ENCODE measurements at regions of chr1 and their contacts with region 1.

Region 1: DNA sequence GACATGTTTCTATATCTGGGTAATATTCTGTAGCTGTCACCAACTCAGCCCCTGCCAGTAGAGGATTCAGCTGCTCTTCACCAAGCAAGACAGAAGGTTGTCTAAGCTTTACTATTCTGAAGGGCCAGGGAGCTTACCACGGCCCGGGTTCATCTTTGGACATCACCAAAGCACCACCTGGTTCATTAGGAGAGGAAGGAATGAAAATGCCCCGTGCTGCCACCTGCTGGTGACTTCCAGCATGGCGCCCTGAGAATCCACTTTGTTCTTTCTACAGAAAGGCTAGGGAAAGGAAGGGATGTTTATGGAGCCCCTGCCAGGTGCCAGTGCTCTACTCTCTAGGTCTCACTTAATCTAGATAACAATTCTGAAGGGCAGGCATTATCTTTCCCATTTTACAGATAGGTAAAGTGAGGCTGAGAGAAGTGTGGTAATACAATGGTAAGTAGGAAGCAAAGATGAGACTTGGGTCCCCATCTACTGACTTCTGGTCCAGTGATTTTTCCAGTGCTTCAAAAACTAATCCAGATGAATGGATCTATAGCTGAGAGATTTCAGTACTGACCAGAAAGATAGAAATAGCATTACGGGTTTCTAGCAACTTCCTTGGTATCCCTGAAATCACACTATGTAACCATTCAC is 79.5 kb downstream of the BEND5 start:
- DNase-seq: peak in 1 of 2 donors; percentile 53
- ATAC-seq: peak; percentile 45 to 66
- H3K4me3 ChIP-seq: no peak overlapping the region
- H3K27ac ChIP-seq: no peak overlapping the region
- H3K4me1 ChIP-seq: no peaks in the 10 kb centered on the region
- H3K27me3 ChIP-seq: peaks cover 0 to 9% (median 5%) of the 10 kb centered on the region in 3 donors
- CTCF ChIP-seq: peak; percentile 64 to 91 (median 88)
- POLR2A ChIP-seq: no peak

Region 2: DNA sequence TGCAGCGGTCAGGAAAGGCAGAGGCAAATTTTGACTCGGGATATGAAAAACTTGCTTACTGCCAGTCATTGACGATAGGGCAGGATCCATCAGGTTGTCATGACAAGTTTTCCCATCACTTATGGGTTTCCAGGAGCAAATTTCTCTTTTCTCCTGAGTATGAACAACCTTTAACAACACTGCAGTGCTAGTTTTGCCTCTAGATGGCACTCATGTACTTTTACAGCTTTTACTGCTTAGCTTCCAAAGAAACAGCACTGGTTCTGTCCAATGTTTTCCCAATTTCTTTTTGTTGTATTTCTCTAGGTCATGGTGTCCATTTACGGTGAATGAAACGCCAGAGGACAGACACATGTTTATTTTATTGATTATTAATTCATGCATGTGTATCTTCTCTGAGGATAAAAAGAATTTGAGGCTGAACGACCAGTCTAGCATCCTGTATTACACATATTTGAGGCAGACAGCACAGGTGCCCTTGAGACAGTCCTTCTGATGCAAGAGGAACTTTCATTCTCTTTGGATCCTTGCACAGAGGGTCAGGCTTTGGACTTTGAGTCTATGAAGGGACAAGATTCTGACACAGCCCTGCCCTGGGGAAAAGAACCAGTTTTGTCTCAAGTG is 587.7 kb before region 1 on chr1:
- in situ Hi-C with region 1: loop called in 1 of 4 experiments (anchors 25 kb)
- intact Hi-C with region 1: no loop called
- DNase-seq: no peak
- ATAC-seq: no peak
- H3K4me3 ChIP-seq: no peak overlapping the region
- H3K27ac ChIP-seq: no peak overlapping the region
- H3K4me1 ChIP-seq: no peaks in the 10 kb centered on the region
- H3K27me3 ChIP-seq: no peaks in the 10 kb centered on the region
- CTCF ChIP-seq: peak; percentile 43 to 76 (median 52)
- POLR2A ChIP-seq: no peak

Region 3: GRCh38 chr1:48552420-48552819 is 144.8 kb before region 1 on chr1:
- in situ Hi-C with region 1: loop called in 1 of 4 experiments (anchors 10 kb)
- intact Hi-C with region 1: loop called (anchors 1 kb)
- DNase-seq: peak in 1 of 2 donors; percentile 19
- ATAC-seq: peak; percentile 74
- H3K4me3 ChIP-seq: no peak overlapping the region
- H3K27ac ChIP-seq: peak overlapping the region in 2 of 4 donors; percentile 63 to 64
- H3K4me1 ChIP-seq: peaks cover 11 to 13% of the 10 kb centered on the region in 2 donors
- H3K27me3 ChIP-seq: no peaks in the 10 kb centered on the region
- CTCF ChIP-seq: peak; percentile 23 to 56 (median 43)
- POLR2A ChIP-seq: no peak

Region 4: GRCh38 chr1:48572646-48573261 is 124.4 kb before region 1 on chr1:
- in situ Hi-C with region 1: loop called in 2 of 4 experiments (anchors 5 to 10 kb)
- intact Hi-C with region 1: loop called (anchors 1 kb)
- DNase-seq: peak in 1 of 2 donors; percentile 16
- ATAC-seq: peak; percentile 36 to 42
- H3K4me3 ChIP-seq: no peak overlapping the region
- H3K27ac ChIP-seq: no peak overlapping the region
- H3K4me1 ChIP-seq: no peaks in the 10 kb centered on the region
- H3K27me3 ChIP-seq: no peaks in the 10 kb centered on the region
- CTCF ChIP-seq: peak; percentile 21 to 70 (median 41)
- POLR2A ChIP-seq: no peak

Region 5: DNA sequence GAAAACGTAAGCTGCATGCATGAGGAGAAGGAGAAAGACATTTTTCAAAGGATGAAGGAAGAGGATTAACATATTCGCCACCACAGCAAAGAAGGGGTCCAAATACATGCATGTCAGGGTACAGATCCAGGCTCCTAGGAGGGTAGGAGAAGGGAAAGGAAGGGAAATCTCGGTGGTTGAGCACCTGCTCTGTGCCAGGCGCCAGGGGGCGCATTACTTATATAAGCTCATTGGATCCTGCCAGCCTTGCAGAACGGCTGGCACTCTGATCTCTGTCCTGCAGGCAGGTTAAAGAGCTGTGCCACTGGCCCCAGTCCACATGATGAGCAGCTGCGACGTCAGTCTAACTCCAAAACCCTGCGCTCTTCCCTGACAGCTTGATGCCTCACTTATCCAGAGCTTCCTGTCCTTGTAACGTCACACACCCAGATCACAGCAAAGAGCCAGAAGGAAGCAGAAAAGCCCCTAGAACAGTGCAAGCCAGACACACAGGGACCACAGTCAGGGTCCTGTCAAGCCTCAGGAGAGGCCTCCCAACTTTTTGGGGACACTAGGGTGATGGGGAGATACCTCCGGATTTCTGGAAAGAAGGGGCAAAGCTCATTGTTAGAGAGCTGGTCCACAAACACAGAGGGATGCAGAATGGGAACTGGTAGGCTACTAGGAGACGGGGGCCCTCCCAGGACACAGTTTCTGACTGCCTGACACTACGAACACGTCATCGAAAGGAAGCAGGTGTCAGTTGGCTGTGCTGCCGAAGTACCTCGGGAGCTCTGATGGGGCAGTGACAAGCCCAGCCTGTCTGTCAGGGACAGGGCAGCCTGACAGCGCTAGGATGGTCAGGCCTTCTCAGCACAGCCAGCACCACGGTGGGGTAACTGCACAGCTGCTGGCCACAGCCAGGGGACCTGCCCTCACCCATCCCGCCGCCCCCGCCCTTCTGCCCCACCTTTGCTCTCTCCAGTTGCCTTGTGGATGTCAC is 19.6 kb before region 1 on chr1:
- in situ Hi-C with region 1: no loop called
- intact Hi-C with region 1: loop called (anchors 2 kb)
- DNase-seq: peak; percentile 21 to 31
- ATAC-seq: peak; percentile 60
- H3K4me3 ChIP-seq: no peak overlapping the region
- H3K27ac ChIP-seq: no peak overlapping the region
- H3K4me1 ChIP-seq: peaks cover 0 to 6% of the 10 kb centered on the region in 2 donors
- H3K27me3 ChIP-seq: no peaks in the 10 kb centered on the region
- CTCF ChIP-seq: peak; percentile 4 to 69 (median 62)
- POLR2A ChIP-seq: no peak

Region 6: DNA sequence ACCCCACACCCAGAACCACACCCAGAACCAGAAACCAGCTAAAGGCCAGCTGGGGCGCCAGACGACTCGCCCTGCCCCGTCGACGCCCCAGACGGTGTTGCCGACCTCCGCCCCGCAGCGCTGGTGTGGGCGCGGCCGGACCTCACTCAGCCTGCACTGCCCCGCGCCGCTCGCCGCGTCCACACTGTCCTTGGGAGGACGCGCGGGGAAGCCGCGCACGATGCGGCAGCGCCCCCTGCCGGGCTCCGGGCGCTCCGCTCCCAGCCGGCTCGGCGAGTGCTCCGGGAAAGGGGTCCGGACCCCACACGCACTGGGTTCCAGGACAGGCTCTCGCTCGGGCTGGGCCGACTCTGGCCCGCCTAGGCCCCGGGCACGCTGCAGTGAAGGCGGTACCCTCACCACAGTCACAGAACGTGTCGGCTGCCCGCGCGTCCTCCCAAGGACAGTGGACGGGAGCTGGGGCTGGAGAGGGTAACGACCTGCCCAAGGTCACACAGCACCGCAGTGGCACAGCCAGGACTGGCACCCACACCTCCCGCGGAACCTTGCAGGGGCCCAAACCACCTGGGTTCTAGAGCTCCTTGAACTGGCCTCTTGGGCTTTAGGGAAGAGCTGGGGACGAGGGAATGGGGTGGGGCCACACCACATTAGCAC is 1635.9 kb after region 1 on chr1:
- in situ Hi-C with region 1: loop called in 1 of 4 experiments (anchors 25 kb)
- intact Hi-C with region 1: no loop called
- DNase-seq: no peak
- ATAC-seq: peak; percentile 54 to 75
- H3K4me3 ChIP-seq: peak overlapping the region; percentile 35 to 53 (median 45)
- H3K27ac ChIP-seq: no peak overlapping the region
- H3K4me1 ChIP-seq: peaks cover 6 to 11% of the 10 kb centered on the region in 2 donors
- H3K27me3 ChIP-seq: peaks cover 14 to 32% (median 24%) of the 10 kb centered on the region in 3 donors
- CTCF ChIP-seq: peak; percentile 38 to 79 (median 61)
- POLR2A ChIP-seq: no peak

Measured in gastrocnemius medialis (tissue), 4 donors.